MCF 10A (cell line): ENCODE measurements at regions of chr10 and their contacts with region 1.

Region 1: GRCh38 chr10:75401569-75402485 is at the start of gene ZNF503:
- DNase-seq: peak; percentile 97
- H3K4me3 Mint-ChIP-seq: peak within 1 kb of the TSS; percentile 80
- H3K27ac Mint-ChIP-seq: peak within 1 kb of the TSS; percentile 51
- H3K4me1 Mint-ChIP-seq: peaks cover 5% of the 10 kb centered on the region
- H3K27me3 Mint-ChIP-seq: no peaks in the 10 kb centered on the region
- CTCF ChIP-seq: no peak
- total RNA-seq, gene ZNF503: 7.3 and 8.1 TPM in 2 replicates

Region 2: DNA sequence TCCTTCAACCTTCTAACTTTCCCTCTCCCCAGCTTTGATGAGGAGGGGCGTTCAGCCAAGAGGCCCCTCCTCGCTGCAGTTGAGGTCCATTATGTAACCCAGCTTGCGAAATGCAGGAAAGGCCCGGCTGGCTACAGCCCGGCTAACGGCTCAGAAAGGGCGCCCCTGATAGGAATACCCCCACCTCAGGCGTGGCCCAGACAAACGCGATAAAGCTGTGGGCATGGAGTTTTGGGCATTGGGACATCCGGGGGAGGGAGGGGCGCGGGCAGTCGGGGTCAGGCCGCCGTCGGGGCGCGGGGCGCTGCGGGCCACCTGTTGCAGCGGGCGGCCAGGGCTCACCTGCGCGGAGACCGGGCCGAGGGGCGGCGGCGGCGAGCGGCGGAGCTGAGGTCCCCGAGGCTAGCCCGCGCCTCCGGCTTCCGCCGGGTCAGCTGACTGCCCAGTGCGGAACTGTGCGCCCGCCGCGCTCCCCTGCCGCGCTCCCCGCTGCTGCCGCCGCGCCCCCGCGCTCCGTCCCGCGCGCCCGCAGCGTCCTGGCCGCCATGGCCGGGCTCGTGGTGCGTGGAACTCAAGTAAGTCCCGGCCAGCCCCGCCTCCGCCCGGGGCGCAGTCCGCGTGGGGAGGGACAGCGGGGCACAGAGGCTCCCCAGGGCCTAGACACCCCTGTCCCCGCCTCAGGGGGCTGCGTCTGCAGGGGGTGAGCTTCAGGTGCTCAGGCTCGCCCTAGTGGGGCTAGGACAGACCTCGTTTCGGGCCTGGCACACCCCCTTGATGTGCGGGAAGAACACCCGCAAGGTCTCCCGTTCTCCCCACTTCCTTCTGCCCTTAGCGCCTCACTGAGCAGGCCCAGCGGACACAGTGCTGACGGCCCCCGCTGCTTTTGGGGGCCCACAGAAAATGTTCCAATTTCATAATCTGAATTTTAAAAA is 29.6 kb after region 1 on chr10 and contains the start of gene LRMDA:
- CTCF ChIA-PET with region 1: interaction called, 5 read pairs
- POLR2A ChIA-PET with region 1: interaction called, 54 read pairs
- intact Hi-C with region 1: no loop called
- DNase-seq: peak; percentile 45
- H3K4me3 Mint-ChIP-seq: no peak within 1 kb of the TSS
- H3K27ac Mint-ChIP-seq: peak within 1 kb of the TSS; percentile 46
- H3K4me1 Mint-ChIP-seq: peaks cover 27% of the 10 kb centered on the region
- H3K27me3 Mint-ChIP-seq: no peaks in the 10 kb centered on the region
- CTCF ChIP-seq: no peak
- total RNA-seq, gene LRMDA: not detected in 2 replicates

Region 3: GRCh38 chr10:75461672-75462649 is 60.1 kb after region 1 on chr10:
- CTCF ChIA-PET with region 1: no interaction called
- POLR2A ChIA-PET with region 1: no interaction called
- intact Hi-C with region 1: no loop called
- DNase-seq: no peak
- H3K4me3 Mint-ChIP-seq: no peak overlapping the region
- H3K27ac Mint-ChIP-seq: no peak overlapping the region
- H3K4me1 Mint-ChIP-seq: no peaks in the 10 kb centered on the region
- H3K27me3 Mint-ChIP-seq: no peaks in the 10 kb centered on the region
- CTCF ChIP-seq: no peak

Region 4: DNA sequence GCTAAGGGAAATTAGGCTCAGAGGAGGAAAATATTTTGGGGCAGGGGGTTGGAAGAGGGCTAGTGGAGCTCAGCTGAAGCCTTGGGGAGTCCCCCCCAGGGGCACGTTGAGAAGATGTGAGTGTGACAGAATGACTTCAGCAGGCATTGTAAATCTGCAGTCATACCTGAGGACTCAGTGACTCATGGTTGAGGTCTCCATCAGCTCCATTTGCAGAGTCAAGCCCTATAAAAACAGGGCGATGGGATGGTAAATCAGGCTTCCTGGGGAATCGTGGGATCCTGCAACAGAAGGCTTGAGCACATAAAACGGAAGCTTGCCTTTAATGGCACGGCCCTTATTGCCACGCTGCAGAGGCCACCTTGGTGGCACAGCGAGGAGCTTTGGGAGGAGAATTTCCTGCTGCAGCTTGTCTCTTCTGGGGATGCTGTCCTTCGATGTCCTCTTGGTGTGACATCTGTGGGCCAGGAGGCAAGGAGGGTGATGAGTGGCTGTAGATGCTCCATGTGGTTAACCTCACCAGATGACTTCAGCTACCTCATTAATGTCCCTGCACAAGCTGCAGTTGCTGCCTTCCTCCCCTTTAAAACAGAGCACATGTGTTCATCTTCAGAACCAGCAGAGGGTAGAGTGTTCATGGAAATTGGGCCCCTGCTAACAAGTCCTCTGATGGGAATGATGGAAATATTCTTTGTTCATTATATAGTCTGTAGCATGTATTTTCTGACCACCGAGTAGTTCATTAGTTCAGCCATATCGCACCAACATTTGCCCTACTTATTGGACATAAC is 315.5 kb after region 1 on chr10:
- CTCF ChIA-PET with region 1: no interaction called
- POLR2A ChIA-PET with region 1: interaction called, 6 read pairs
- intact Hi-C with region 1: loop called (anchors 10 kb)
- DNase-seq: no peak
- H3K4me3 Mint-ChIP-seq: no peak overlapping the region
- H3K27ac Mint-ChIP-seq: no peak overlapping the region
- H3K4me1 Mint-ChIP-seq: peaks cover 20% of the 10 kb centered on the region
- H3K27me3 Mint-ChIP-seq: peaks cover 6% of the 10 kb centered on the region
- CTCF ChIP-seq: no peak

Region 5: DNA sequence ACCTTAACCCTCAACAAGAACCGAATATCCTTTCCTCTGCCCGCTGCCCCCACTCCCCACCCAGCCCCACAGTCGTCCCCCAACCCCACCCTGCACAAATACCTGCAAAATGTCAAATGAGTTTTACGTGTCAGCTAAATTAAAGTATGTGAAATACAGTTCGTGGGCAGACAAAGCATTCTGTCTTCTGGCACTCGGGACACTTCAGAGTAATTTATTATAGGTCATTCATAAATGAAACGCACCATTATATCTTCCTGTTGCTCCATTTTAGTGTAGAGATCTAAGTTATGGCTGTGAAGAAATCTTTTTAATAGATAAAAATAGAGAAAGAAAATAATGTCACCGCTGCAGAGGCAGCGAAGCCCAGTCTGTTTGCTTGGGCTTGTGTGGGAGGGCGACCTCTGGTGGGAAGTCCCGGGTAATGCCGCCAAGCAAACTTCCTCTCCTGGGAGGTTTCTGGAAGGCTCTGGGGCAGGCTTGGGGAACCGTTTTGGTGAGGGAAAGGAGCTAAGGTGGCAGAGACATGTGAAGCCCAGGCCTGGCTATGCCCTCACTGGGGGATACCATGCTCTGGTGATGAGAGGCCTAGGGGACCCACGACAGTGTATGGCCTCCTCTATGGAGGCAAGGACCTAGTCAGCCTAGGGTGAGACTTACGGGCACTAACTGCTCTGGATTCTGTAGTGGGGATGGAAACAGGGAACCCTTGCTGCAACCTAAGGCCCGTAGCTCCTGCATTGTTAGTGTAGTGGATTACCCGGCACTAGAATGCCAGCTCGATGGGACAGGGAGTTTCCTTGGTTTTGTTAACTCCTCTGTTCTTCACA is 634.5 kb after region 1 on chr10:
- CTCF ChIA-PET with region 1: interaction called, 35 read pairs
- POLR2A ChIA-PET with region 1: no interaction called
- intact Hi-C with region 1: loop called (anchors 1 kb)
- DNase-seq: peak; percentile 63
- H3K4me3 Mint-ChIP-seq: no peak overlapping the region
- H3K27ac Mint-ChIP-seq: no peak overlapping the region
- H3K4me1 Mint-ChIP-seq: peaks cover 6% of the 10 kb centered on the region
- H3K27me3 Mint-ChIP-seq: no peaks in the 10 kb centered on the region
- CTCF ChIP-seq: peak; percentile 94

Region 6: DNA sequence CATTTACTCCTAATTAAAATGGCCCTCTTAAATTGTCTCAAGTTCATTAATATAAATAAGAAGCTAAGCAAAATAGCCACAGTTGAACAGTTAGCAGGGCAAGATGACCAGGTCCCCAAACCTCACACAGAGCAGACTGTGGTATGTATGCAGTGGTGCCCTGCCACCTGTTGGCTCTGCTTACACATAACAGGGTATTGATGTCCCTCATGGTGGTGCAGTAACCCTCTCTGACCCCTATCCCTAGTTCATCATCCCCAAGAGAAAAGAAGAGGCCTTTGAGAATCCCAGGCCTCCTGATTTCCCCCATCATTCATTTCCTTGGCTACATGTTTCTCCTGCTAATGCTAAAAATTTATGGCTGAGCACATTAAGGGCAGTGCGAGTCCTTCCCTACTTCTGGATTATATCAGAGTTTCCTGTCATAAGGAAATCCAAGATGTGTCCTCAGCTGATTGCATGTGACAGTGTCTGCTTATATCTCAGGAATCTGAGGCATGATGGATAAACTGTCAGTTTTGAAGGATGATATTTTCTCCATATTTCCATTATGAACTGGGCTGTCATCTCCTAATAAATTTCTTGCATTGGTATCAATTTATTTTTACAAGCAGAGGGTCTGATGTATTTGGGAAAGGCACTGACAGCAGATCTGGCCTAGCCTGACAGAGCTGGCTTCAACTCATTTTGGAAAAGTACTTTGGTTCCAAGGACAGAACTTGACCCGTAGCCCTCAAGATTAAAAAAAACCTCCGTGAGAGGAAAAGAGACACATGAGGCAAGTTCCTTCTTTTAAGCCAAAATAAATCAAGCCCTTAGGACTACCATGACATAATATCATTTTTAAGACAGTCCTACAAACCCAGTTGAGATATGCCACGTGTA is 910.2 kb after region 1 on chr10:
- CTCF ChIA-PET with region 1: no interaction called
- POLR2A ChIA-PET with region 1: interaction called, 4 read pairs
- intact Hi-C with region 1: loop called (anchors 2 kb)
- DNase-seq: peak; percentile 50
- H3K4me3 Mint-ChIP-seq: no peak overlapping the region
- H3K27ac Mint-ChIP-seq: no peak overlapping the region
- H3K4me1 Mint-ChIP-seq: no peaks in the 10 kb centered on the region
- H3K27me3 Mint-ChIP-seq: no peaks in the 10 kb centered on the region
- CTCF ChIP-seq: peak; percentile 52